ENCODE measurements at regions of chr15 and their contacts with region 1.

Region 1: DNA sequence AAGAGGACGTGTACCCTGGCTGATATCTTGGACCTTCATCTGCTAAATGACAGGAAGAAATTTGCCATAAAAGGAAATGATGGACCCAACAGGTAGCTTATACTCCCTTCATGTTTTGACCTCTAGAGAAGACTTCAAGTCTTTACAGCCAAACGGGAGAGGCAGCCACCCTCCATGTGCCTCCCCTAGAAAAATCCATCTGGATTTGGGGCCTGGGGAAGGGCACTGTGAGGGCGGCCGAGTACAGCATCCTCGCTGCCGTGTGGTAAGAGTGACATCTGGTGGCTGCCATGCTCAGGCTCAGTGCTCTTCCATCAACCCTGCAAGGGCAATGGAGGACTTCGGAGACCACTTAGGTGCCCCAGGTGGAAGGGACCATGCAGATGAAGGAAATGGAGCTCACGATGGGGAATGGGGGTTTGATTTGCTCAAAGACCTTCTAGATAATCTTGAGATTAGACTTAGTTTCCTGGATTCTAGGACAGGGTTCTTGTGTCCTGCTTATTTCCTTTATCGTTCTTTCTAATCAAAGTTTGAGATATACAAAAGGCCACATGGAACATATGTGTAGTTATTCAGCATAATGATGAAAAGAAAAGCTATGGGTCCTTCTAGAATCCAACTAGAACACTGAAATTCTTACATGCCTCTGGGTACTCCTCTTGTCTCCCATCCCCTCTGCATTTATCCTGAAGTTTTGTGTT is 44.4 kb downstream of the AQP9 start:
- DNase-seq: peak; percentile 48
- ATAC-seq: peak; percentile 100
- H3K4me3 ChIP-seq: no peak overlapping the region
- H3K27ac ChIP-seq: no peak overlapping the region
- H3K4me1 ChIP-seq: no peaks in the 10 kb centered on the region
- H3K27me3 ChIP-seq: peaks cover 5% of the 10 kb centered on the region; the same call in 1 of the 2 replicates
- CTCF ChIP-seq: peak; percentile 79 to 88 (median 87)
- POLR2A ChIP-seq: no peak
- RAD21 ChIP-seq: peak; percentile 93

Region 2: GRCh38 chr15:57561041-57561711 is 621.4 kb before region 1 on chr15:
- CTCF ChIA-PET with region 1: interaction called, 4 read pairs
- POLR2A ChIA-PET with region 1: no interaction called
- RAD21 ChIA-PET with region 1: no interaction called
- intact Hi-C with region 1: loop called (anchors 2 kb)
- DNase-seq: peak; percentile 55
- ATAC-seq: peak; percentile 92
- H3K4me3 ChIP-seq: no peak overlapping the region
- H3K27ac ChIP-seq: no peak overlapping the region
- H3K4me1 ChIP-seq: peaks cover 0 to 17% of the 10 kb centered on the region in 2 experiments; a peak in 2 of 4 replicates
- H3K27me3 ChIP-seq: no peaks in the 10 kb centered on the region
- CTCF ChIP-seq: peak; percentile 86 to 91 (median 86)
- POLR2A ChIP-seq: no peak
- RAD21 ChIP-seq: peak; percentile 89

Region 3: GRCh38 chr15:57732526-57733331 is 449.9 kb before region 1 on chr15:
- CTCF ChIA-PET with region 1: interaction called, 3 read pairs
- POLR2A ChIA-PET with region 1: no interaction called
- RAD21 ChIA-PET with region 1: no interaction called
- intact Hi-C with region 1: loop called (anchors 5 kb)
- DNase-seq: peak; percentile 48
- ATAC-seq: peak; percentile 91
- H3K4me3 ChIP-seq: no peak overlapping the region
- H3K27ac ChIP-seq: no peak overlapping the region
- H3K4me1 ChIP-seq: peaks cover 4% of the 10 kb centered on the region in 2 experiments; a peak in 3 of 4 replicates
- H3K27me3 ChIP-seq: no peaks in the 10 kb centered on the region
- CTCF ChIP-seq: peak; percentile 47 to 97 (median 89); a peak in 5 of 6 replicates
- POLR2A ChIP-seq: no peak
- RAD21 ChIP-seq: peak; percentile 46; the same call in 1 of the 2 replicates

Region 4: GRCh38 chr15:57866149-57866736 is 316.4 kb before region 1 on chr15:
- CTCF ChIA-PET with region 1: no interaction called
- POLR2A ChIA-PET with region 1: no interaction called
- RAD21 ChIA-PET with region 1: no interaction called
- intact Hi-C with region 1: loop called (anchors 1 kb)
- DNase-seq: peak; percentile 52
- ATAC-seq: peak; percentile 78
- H3K4me3 ChIP-seq: no peak overlapping the region
- H3K27ac ChIP-seq: no peak overlapping the region
- H3K4me1 ChIP-seq: no peaks in the 10 kb centered on the region
- H3K27me3 ChIP-seq: no peaks in the 10 kb centered on the region
- CTCF ChIP-seq: peak; percentile 63 to 88 (median 86)
- POLR2A ChIP-seq: no peak
- RAD21 ChIP-seq: peak; percentile 60

Region 5: GRCh38 chr15:58077427-58077826 is 105.2 kb before region 1 on chr15:
- CTCF ChIA-PET with region 1: interaction called, 24 read pairs
- POLR2A ChIA-PET with region 1: no interaction called
- RAD21 ChIA-PET with region 1: interaction called in 1 of 2 experiments, 7 read pairs
- intact Hi-C with region 1: loop called (anchors 1 kb)
- DNase-seq: peak; percentile 18
- ATAC-seq: peak; percentile 90
- H3K4me3 ChIP-seq: no peak overlapping the region
- H3K27ac ChIP-seq: no peak overlapping the region
- H3K4me1 ChIP-seq: no peaks in the 10 kb centered on the region
- H3K27me3 ChIP-seq: no peaks in the 10 kb centered on the region
- CTCF ChIP-seq: peak; percentile 29 to 52 (median 43); a peak in 5 of 6 replicates
- POLR2A ChIP-seq: no peak
- RAD21 ChIP-seq: peak; percentile 62

Measured in HCT116 (cell line).